ENCODE measurements at regions of chr20 and their contacts with region 1.

Region 1: DNA sequence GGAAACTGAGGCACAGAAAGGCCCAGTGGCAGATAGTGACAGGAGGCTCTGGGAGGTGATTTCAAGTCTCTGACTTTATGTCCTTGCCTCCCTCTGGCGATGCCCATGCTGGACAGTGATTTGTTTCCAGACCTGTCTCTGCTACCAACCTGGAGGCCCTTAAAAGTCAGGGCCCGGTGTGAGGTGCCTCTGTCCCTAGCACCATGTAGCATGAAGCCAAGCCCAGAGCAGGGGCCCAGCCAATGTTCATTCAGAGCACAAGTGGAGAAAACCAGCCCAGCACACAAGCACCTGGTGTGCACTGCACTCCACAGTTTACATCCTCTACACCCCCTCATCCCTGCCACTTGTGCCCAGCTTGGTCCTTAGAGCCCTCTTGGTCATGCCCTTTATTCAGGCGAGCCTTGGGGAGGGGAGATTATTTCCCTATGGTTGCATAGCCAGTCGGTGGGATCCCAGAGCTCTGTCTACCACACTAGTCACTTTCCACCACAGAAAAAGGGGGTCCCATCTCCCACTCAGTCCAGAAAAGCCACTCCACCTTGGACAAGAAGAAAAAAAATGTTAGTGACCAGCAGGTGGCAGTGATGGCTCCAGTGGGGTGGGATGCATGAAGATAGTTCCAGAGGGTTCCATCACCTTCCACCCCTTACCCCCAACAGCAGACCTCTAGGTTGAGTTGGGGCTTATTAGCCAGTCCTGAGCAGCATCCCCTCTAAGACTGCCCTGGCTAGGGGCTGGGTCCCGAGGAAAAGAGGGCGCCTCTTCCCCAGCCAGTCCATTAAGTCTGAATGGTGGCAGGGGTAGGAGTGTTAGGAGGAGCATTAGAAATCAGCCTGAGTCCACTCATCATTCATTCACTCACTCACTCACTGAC is 30.9 kb downstream of the KIAA1755 start:
- DNase-seq: no peak
- H3K4me3 ChIP-seq: no peak overlapping the region
- H3K27ac ChIP-seq: no peak overlapping the region
- H3K4me1 ChIP-seq: peaks cover 6 to 24% (median 10%) of the 10 kb centered on the region in 3 donors
- H3K27me3 ChIP-seq: no peaks in the 10 kb centered on the region
- CTCF ChIP-seq: peak in 5 of 6 experiments; percentile 30 to 52 (median 38)
- POLR2A ChIP-seq: no peak

Region 2: DNA sequence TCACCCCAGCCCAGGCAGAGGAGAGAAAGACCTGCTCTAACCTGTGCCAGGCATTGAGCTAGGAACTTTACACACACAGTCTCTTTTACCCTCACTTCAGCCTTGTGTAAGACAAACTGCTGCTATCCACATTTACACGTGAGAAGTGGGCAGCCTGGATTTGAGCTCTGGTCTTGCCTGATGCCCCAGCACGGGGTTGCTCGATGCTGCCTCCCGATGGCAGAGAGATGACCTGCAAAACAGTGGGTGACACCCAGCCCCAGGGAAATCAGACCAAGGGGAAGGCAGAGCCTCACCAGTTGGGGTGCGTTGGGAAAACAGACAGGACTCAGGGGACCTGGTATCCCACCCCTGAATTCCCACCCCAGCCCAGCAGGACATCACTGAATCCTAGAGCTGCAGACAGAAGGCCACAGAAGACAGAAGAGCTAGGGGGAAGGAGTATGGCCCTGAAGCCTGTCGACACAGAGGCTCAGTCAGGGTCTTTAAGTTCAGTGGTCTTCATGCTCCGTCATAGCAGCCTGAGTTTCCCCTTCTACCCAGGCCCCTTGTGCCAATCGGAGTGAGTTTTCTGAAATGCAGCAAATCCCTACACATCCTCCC is 75.3 kb after region 1 on chr20:
- intact Hi-C with region 1: loop called (anchors 5 kb)
- DNase-seq: no peak
- H3K4me3 ChIP-seq: no peak overlapping the region
- H3K27ac ChIP-seq: no peak overlapping the region
- H3K4me1 ChIP-seq: peaks cover 4 to 10% (median 9%) of the 10 kb centered on the region in 3 donors
- H3K27me3 ChIP-seq: peaks cover 0 to 26% (median 0%) of the 10 kb centered on the region in 4 donors
- CTCF ChIP-seq: peak in 5 of 6 experiments; percentile 18 to 63 (median 32)
- POLR2A ChIP-seq: no peak

Measured in esophagus squamous epithelium (tissue), 5 donors.